ENCODE measurements at regions of chr3 and their contacts with region 1.

Region 1: DNA sequence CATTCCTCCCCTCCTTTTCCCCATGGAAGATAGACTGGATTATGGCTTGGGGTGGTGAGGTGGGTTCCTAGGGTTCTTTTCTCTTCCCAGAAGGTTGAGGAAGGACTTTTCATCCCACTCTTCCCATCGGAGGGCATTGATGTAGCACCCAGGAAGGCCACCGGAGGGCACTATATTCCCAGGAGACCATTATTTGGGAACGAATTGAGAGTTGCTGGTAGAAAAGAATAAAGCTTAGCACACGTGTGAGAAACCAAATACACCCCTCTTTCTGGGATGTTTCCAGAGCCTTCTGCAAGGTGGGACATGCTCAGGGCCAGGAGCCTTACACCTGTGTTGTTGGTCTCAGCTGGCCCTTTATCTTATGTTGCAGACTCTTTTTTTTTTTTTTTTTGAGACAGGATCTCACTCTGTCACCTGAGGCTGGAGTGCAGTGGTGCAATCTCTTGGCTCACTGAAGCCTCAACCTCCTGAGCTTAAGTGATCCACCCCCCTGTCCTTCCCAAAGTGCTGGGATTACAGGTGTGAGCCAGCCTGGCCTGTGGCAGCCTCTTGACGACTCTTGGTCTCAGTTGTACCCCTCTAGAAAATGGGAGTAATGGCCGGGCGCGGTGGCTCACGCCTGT is 6.3 kb upstream of the CDC25A start:
- DNase-seq: peak; percentile 63
- H3K4me3 ChIP-seq: no peak overlapping the region
- H3K27ac ChIP-seq: no peak overlapping the region
- H3K4me1 ChIP-seq: peaks cover 2% of the 10 kb centered on the region
- H3K27me3 ChIP-seq: no peaks in the 10 kb centered on the region
- CTCF ChIP-seq: peak; percentile 88 to 97

Region 2: DNA sequence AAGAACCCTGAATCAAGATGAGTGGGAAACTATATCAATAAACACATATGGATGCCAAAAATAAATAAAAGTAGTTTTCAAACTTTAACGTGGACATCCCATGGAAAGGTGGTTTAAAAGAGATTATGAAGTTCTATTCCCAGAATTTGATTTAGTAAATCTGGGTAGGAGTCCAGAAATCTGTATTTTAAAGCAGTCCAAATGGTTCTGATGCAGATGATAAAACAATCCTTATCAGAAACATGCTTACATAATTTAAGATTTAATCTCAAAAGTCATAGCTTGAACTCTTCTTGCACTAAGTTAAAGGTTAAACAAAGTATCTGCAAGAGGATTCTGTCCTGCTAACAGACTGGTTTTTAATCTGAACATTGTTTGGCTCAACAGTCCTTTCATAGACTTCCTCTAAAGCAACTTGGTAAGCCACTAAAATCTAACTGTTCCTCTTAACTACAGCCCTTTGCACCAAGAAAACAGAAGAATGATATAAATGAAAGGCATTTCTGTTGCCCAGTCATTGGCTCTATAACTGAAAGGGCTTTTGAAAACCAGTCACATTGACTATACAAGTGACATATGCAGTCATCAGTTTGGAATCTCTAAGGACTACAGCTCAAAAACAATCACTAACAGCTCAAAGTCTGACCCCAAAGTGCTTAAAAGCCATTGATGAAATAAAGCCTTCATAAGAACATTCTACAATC is 154.9 kb before region 1 on chr3:
- CTCF ChIA-PET with region 1: no interaction called
- dilution Hi-C with region 1: no loop called
- in situ Hi-C with region 1: no loop called
- intact Hi-C with region 1: no loop called
- DNase-seq: peak; percentile 43
- H3K4me3 ChIP-seq: no peak overlapping the region
- H3K27ac ChIP-seq: peak overlapping the region; percentile 43
- H3K4me1 ChIP-seq: peaks cover 33% of the 10 kb centered on the region
- H3K27me3 ChIP-seq: no peaks in the 10 kb centered on the region
- CTCF ChIP-seq: no peak

Region 3: DNA sequence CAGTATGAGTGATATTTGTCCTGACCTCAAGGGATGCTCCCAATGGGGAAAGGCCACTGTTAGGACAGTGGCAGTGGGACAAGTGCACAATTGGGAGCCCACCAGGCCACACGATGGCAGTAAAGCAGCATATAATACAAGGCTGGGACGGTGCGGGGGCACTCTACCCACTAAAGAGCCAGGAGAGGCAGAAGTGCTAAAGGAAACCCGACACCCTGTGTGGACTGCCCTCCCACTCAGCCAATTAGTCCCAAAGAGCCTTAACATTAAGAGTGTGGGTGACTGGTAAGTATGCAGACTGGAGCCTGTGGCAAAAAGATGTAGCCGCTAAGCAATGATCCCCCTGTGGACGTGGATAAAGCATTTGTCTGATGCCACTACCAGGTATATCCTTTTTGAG is 38.2 kb after region 1 on chr3:
- CTCF ChIA-PET with region 1: no interaction called
- dilution Hi-C with region 1: loop called (anchors 5 kb)
- in situ Hi-C with region 1: no loop called
- intact Hi-C with region 1: loop called (anchors 1 kb)
- DNase-seq: peak; percentile 60
- H3K4me3 ChIP-seq: peak overlapping the region in 1 of 3 experiments; percentile 4
- H3K27ac ChIP-seq: no peak overlapping the region
- H3K4me1 ChIP-seq: peaks cover 5% of the 10 kb centered on the region
- H3K27me3 ChIP-seq: no peaks in the 10 kb centered on the region
- CTCF ChIP-seq: peak; percentile 52 to 74

Region 4: DNA sequence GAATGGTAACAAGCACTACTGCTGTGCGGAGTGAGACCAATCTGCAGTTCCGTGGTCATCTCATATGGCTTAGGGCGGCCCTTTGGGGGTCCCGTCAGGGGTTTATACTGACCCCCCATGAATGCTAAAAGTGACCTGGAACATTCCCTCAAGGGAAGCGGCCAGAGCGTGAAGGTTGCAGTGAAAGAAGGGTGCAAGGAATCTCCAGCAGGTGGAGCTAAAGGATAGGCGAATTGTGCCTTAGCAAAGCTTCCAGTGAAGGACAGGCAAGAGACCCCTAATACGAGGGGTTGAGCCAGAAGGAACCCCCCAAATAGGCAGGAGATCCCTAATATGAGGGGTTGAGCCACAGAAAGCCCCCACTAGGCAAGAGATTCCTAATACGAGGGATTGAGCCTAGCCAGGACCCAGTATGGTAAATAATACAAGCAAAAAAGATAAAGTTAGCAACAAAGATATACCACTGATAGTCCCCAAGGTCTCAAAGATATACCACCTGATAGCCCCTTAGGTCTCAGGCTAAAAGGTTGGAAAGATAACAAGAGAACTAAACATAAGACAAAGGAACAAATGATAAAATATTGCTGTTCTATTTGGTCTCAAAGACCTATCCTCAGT is 79.1 kb after region 1 on chr3:
- CTCF ChIA-PET with region 1: interaction called, 10 read pairs
- dilution Hi-C with region 1: loop called (anchors 5 kb)
- in situ Hi-C with region 1: no loop called
- intact Hi-C with region 1: loop called (anchors 1 kb)
- DNase-seq: peak; percentile 34
- H3K4me3 ChIP-seq: no peak overlapping the region
- H3K27ac ChIP-seq: no peak overlapping the region
- H3K4me1 ChIP-seq: peaks cover 15% of the 10 kb centered on the region
- H3K27me3 ChIP-seq: no peaks in the 10 kb centered on the region
- CTCF ChIP-seq: peak; percentile 84 to 86

Region 5: GRCh38 chr3:48395714-48396113 is 201.2 kb after region 1 on chr3:
- CTCF ChIA-PET with region 1: interaction called, 10 read pairs
- dilution Hi-C with region 1: no loop called
- in situ Hi-C with region 1: no loop called
- intact Hi-C with region 1: no loop called
- DNase-seq: no peak
- H3K4me3 ChIP-seq: no peak overlapping the region
- H3K27ac ChIP-seq: no peak overlapping the region
- H3K4me1 ChIP-seq: no peaks in the 10 kb centered on the region
- H3K27me3 ChIP-seq: no peaks in the 10 kb centered on the region
- CTCF ChIP-seq: no peak